ENCODE measurements at regions of chr7 and their contacts with region 1.

Region 1: DNA sequence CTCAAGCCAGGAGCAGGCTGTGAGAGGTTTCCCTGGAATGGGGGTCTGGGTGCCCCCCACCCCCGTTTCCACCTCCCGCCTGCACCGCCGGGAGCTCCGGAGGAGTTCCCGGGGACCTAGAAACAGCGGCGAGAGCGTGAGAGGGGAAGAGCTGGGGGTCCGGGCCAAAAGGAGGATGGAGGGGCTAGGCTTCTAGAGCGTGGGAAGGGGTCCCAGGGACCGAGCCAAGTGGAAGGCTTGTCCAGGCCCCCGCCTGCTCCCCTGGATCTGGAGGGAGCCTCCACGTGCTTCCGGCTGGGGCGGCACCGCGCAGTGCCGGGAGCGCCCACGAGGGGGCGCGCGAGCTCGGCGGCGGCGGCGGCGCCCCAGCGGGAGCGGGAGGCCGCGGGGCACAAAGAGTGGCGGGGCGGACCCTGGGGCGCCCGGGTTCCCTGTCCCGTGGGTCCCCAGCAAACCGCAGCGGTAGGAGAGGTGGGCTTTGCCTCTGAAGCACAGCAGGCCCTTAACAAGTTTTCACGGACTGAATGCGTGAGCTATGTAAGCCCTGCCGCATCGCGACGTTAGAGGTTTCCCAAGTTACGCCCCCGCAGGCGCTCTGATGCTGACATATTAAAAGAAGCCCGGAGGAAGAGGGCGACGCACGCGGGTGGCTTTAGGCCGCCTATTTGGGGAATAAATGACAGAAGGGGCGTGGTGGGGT is 104.4 kb upstream of the LRRC4 start:
- DNase-seq: peak; percentile 71
- H3K4me3 ChIP-seq: peak overlapping the region; percentile 68
- H3K27ac ChIP-seq: no peak overlapping the region
- H3K4me1 ChIP-seq: peaks cover 11% of the 10 kb centered on the region
- CTCF ChIP-seq: peak; percentile 85

Region 2: DNA sequence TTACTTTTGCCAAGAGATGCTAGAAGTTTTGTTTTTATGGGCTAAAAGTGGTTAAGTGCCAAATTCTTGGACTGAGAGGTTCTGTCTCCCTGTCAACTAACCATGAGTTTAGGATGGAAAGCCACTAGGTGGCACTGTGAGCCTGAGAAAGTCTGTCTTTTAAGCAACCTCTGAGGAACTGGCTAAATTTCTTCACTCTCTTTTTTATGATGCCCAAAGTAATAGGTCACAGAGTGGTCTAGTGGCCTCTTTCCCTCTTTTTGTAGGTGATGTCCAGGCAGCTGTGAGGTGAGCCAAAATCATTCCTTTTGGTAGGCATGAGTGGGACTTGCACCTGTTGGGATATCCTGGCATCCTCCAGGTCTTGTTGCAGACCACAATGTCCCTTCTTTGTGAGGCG is 426.9 kb before region 1 on chr7:
- CTCF ChIA-PET with region 1: no interaction called
- POLR2A ChIA-PET with region 1: no interaction called
- intact Hi-C with region 1: loop called (anchors 10 kb)
- DNase-seq: peak; percentile 80
- H3K4me3 ChIP-seq: no peak overlapping the region
- H3K27ac ChIP-seq: no peak overlapping the region
- H3K4me1 ChIP-seq: no peaks in the 10 kb centered on the region
- CTCF ChIP-seq: peak; percentile 89

Region 3: DNA sequence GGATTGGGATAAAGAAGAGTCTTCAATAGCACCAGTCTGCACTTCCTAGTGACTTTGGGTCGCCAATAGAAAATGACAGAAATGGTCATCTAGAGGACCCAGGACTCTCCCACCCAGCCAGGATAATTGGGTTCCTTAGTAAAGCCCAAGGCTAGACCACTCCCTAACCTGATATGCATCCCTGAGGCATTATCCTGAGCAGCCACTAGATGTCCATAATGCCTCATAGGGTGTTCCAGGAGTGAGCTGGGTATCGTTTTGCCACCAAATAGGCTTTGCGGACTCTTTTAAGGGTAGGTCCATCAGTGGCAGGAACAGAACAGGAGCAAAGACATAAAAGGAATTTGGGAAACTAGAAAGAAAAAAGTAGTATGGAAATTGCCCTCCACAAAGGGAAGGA is 100.0 kb before region 1 on chr7:
- CTCF ChIA-PET with region 1: no interaction called
- POLR2A ChIA-PET with region 1: no interaction called
- intact Hi-C with region 1: loop called (anchors 5 kb)
- DNase-seq: peak; percentile 18
- H3K4me3 ChIP-seq: no peak overlapping the region
- H3K27ac ChIP-seq: no peak overlapping the region
- H3K4me1 ChIP-seq: no peaks in the 10 kb centered on the region
- CTCF ChIP-seq: peak; percentile 69

Region 4: GRCh38 chr7:128108641-128109423 is 26.8 kb before region 1 on chr7:
- CTCF ChIA-PET with region 1: interaction called, 3 read pairs
- POLR2A ChIA-PET with region 1: interaction called, 4 read pairs
- intact Hi-C with region 1: loop called (anchors 2 kb)
- DNase-seq: peak; percentile 93
- H3K4me3 ChIP-seq: peak overlapping the region; percentile 51
- H3K27ac ChIP-seq: peak overlapping the region; percentile 95
- H3K4me1 ChIP-seq: peaks cover 86% of the 10 kb centered on the region
- CTCF ChIP-seq: no peak